Activated T-helper 1 cell treated with anti-CD3 and anti-CD28 coated beads, Interleukin-12 subunit alpha, Interleukin-12 subunit beta, Interleukin-2, Interleukin-4 antibody, amounts not matched to agents 30 ng/mL and 10 ng/mL and 1 ng/mL, durations not matched to agents 14 hours and 24 hours and 36 hours (primary cell): ENCODE measurements at regions of chr11 and their contacts with region 1.

Region 1: DNA sequence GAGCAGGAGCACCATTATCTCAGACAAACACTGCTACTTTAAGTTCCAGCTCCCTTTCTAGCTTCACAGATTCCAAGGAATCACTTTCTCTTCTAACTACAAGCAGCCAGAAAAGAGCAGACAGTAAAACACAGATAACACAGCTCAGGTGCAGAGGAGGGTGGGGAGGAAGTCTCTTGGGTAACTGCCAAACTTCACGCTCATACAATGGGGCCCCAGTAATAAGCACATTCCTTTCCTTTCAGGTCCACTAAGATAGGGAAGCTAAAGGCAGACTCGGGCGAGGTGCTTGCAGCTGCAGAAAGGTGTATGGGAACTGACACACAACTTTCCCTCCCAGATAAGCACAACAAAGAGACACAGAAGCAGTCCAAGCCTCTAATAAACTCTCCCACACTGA is 69.2 kb upstream of the OR9G4 start:
- DNase-seq: no peak
- H3K4me3 Mint-ChIP-seq: no peak overlapping the region
- H3K27ac Mint-ChIP-seq: no peak overlapping the region
- H3K4me1 Mint-ChIP-seq: no peaks in the 10 kb centered on the region
- H3K27me3 Mint-ChIP-seq: no peaks in the 10 kb centered on the region

Region 2: DNA sequence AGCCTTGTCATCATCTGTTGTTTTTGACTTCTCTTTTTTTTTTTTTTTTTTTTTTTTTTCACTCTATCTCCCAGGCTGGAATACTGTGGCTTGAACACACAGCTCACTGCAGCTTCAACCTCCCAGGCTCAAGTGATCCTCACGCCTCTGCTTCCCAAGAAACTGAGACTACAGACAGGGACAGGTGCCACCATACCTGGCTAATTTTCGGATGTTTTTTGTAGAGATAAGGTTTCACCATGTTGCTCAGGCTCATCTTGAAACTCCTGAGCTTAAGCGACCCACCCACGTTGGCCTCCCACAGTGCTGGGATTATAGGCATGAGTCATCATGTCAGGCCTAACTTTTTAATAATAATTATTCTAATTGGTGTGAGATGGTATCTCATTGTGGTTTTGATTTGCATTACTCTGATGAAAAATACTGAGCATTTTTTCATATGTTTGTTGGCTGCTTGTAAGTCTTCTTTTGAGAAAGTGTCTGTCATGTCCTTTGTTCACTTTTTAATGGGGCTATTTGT is 17.9 kb before region 1 on chr11:
- intact Hi-C with region 1: no loop called
- DNase-seq: no peak
- H3K4me3 Mint-ChIP-seq: no peak overlapping the region
- H3K27ac Mint-ChIP-seq: no peak overlapping the region
- H3K4me1 Mint-ChIP-seq: no peaks in the 10 kb centered on the region
- H3K27me3 Mint-ChIP-seq: no peaks in the 10 kb centered on the region

Region 3: DNA sequence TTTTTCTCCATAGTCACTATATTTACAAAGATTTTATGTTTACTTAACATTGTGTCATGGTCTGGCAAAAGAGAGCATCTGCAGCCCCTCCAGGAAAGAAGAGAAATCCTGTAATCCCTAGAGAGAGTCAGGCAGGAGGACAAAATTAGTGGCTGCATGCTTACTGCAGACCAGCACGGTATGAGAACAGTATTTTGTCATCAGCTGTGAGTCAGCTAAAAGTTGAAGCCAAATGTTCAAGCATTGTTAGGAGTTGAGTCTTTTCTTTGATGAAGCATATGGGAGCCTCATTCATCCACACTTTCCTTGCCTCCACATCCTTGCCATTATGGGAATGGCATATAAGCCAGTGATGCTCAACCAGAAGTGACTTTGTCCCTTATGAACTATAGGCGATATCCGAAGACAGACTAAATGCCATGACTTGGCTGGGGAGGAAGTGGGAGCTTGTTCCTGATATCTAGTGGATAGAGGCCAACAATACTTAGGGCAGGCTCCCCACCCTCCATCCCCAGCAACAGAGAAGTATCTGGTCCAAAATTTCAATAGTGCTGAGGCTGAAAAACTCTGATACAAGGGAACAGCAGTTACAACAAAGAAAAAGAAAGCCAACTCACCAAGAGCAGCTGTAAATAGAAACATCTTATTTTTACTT is 59.1 kb after region 1 on chr11:
- intact Hi-C with region 1: loop called (anchors 10 kb)
- DNase-seq: no peak
- H3K4me3 Mint-ChIP-seq: no peak overlapping the region
- H3K27ac Mint-ChIP-seq: no peak overlapping the region
- H3K4me1 Mint-ChIP-seq: no peaks in the 10 kb centered on the region
- H3K27me3 Mint-ChIP-seq: no peaks in the 10 kb centered on the region